OCI-LY7 (cell line): ENCODE measurements at regions of chr10 and their contacts with region 1.

Region 1: DNA sequence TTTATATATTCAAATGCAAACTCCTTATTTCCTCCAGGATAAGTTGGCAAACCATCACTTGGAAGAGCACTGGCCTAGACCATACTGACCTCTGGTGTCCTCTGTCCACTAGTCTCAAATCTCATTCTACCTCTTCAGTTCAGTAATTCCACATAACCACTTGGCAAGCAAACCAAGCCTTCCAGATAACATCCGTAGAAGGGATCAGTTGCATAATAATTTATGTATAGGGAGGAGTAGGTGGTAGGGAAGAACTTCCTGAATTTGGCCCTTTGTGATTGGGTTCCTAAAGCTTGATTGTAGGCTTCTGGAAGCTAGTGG is 55.0 kb downstream of the WAC start:
- DNase-seq: no peak
- H3K4me3 ChIP-seq: no peak overlapping the region
- H3K27ac ChIP-seq: no peak overlapping the region
- H3K4me1 ChIP-seq: no peaks in the 10 kb centered on the region
- CTCF ChIP-seq: no peak

Region 2: DNA sequence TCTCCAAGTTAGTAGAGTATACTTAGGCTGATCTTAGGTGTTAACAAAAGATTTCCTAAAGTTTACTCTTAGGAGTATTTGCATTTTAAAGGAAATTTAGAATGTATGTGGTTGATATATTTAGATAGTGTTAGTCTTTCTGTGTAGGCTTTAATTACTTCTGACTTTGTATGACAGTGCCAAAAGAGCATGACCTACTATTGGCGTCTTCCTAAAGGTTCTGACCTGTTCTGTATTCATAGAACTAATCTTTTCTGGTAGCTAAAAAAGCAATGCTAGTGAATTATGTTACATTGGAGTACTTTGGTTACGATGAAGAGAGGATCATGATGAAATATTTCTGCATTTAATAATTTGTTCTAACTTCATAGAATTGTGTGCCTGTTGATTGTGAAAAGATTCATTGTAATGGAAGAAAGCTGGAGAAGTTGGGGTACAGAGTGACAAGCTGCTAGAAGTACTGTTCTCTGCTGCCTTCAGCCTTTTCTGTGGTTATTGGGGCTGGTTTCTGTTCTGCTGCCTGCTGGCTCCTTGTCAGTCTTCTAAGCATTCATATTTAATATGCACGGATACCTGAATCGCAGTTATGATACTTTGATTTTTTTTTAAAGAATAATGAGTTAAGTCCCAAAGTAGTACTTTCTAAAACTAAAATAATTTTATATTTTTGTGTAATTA is 41.8 kb before region 1 on chr10:
- CTCF ChIA-PET with region 1: no interaction called
- POLR2A ChIA-PET with region 1: interaction called, 7 read pairs
- intact Hi-C with region 1: loop called (anchors 5 kb)
- DNase-seq: no peak
- H3K4me3 ChIP-seq: no peak overlapping the region
- H3K27ac ChIP-seq: no peak overlapping the region
- H3K4me1 ChIP-seq: peaks cover 17% of the 10 kb centered on the region
- CTCF ChIP-seq: no peak

Region 3: GRCh38 chr10:28564905-28565304 is 23.0 kb before region 1 on chr10:
- CTCF ChIA-PET with region 1: no interaction called
- POLR2A ChIA-PET with region 1: interaction called, 16 read pairs
- intact Hi-C with region 1: no loop called
- DNase-seq: no peak
- H3K4me3 ChIP-seq: no peak overlapping the region
- H3K27ac ChIP-seq: no peak overlapping the region
- H3K4me1 ChIP-seq: peaks cover 10% of the 10 kb centered on the region
- CTCF ChIP-seq: no peak